ENCODE measurements at regions of chr15 and their contacts with region 1.

Region 1: DNA sequence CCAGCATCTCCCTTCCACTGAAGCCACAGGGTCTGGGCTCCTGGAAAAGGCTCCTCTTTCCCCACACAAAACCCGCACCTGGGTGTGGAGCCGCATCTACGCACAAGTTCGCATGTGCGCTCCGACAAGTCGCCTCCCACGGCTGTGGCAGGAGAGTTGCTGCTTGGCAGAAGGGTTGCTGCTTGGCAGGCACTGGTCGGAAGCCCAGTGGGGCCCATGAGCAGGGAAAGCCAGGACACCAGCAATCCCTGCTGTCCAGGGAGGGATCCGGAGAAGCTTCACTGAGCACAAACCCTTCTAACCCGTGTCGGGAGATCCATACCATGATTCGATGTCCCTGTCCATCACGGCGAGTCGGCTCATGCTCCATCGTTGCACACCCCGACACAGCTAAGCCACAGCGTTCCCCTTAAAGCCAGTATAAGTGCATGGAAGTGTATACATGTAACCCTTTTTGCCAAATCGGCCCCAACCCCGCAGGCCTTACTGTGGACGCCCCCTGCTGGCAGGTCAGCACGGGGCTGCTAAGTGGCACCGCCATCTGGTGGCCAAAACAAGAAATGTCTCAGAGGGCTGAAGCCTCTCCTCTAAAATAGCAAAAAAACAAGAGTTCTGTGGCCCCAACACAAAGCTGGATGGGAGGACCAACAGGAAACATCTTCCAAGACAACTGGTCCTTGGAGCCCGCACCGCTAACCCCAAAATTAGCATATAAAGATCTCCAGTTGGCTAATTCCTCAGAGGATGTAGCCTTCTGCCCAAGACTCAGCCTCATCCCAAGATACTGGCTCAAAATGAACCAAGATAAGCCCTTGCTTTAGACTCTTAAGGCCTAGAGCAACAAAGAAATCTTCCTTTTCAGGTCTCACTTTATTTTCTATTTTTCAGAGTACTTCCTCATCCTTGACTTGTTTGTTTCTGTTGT is 8.3 kb downstream of the ANKRD63 start:
- DNase-seq: peak; percentile 85
- ATAC-seq: peak; percentile 73 to 88
- H3K4me3 ChIP-seq: no peak overlapping the region
- H3K27ac ChIP-seq: no peak overlapping the region
- H3K4me1 ChIP-seq: peaks cover 18% of the 10 kb centered on the region
- H3K27me3 ChIP-seq: peaks cover 21% of the 10 kb centered on the region
- CTCF ChIP-seq: peak; percentile 100

Region 2: DNA sequence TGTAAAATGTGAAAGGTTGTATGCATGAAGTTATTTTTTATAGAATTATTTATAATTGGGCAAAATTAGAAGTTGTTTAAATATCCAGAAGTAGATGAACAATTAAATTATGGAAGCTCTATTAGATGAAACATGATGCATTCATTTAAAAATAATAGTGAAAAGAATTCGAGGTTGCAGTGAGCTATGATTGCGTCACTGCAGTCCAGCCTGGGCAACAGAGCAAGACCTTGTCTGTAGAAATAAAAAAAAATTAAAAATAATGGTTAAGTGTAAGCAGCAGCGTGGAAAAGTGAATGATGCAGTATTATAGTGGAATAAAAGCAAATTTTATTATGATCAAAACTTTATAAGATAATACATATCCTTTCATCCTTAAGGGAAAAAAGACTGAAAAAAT is 99.5 kb before region 1 on chr15:
- intact Hi-C with region 1: no loop called
- DNase-seq: no peak
- ATAC-seq: no peak
- H3K4me3 ChIP-seq: no peak overlapping the region
- H3K27ac ChIP-seq: no peak overlapping the region
- H3K4me1 ChIP-seq: no peaks in the 10 kb centered on the region
- H3K27me3 ChIP-seq: no peaks in the 10 kb centered on the region
- CTCF ChIP-seq: no peak

Region 3: DNA sequence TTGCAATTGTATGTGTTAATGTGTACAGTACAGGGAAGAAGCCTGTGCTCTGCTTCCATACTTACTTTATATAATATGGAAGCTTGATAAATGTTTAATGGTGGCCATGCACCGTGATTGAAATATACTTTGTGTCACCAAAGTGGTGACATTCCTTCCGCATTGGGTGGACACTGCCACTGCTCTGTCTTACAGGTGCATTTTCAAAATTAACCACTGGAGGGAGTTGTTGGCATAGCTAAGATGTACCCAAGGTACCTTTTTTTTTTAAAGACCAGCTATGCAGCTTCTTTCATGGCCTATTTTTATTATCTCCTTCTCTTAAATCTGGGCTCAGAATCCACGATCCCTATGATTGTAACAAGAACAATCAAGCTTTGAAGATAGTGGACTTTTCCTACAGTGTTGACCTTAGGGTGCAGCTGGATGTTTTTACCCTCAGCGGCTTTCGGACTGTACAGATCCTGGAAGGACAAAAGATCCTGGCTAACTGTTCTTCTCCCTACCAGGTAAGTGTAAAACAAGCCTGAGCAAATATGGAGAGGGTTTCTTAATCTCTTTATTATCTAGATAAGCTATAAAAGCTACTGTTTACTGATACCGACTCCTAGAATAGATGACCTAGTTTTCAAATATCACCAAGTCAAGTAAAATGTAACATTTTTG is 57.3 kb before region 1 on chr15:
- intact Hi-C with region 1: loop called (anchors 5 kb)
- DNase-seq: no peak
- ATAC-seq: peak; percentile 91 to 93
- H3K4me3 ChIP-seq: no peak overlapping the region
- H3K27ac ChIP-seq: no peak overlapping the region
- H3K4me1 ChIP-seq: no peaks in the 10 kb centered on the region
- H3K27me3 ChIP-seq: no peaks in the 10 kb centered on the region
- CTCF ChIP-seq: peak; percentile 91

Measured in lower lobe of right lung (tissue), 2 donors.